ENCODE measurements at regions of chr12 and their contacts with region 1.

Region 1: GRCh38 chr12:2498964-2499500 is 295.7 kb upstream of the FKBP4 start:
- DNase-seq: no peak

Region 2: GRCh38 chr12:2561367-2561766 is 62.3 kb after region 1 on chr12:
- intact Hi-C with region 1: no loop called
- DNase-seq: no peak

Region 3: GRCh38 chr12:2583091-2583497 is 84.1 kb after region 1 on chr12:
- intact Hi-C with region 1: loop called in 1 of 2 experiments (anchors 1 kb)
- DNase-seq: peak; percentile 91

Region 4: GRCh38 chr12:3049611-3050249 is 550.7 kb after region 1 on chr12:
- intact Hi-C with region 1: no loop called
- DNase-seq: no peak

Measured in posterior vena cava (tissue), 2 donors.